A673 (cell line): ENCODE measurements at regions of chr11 and their contacts with region 1.

Region 1: DNA sequence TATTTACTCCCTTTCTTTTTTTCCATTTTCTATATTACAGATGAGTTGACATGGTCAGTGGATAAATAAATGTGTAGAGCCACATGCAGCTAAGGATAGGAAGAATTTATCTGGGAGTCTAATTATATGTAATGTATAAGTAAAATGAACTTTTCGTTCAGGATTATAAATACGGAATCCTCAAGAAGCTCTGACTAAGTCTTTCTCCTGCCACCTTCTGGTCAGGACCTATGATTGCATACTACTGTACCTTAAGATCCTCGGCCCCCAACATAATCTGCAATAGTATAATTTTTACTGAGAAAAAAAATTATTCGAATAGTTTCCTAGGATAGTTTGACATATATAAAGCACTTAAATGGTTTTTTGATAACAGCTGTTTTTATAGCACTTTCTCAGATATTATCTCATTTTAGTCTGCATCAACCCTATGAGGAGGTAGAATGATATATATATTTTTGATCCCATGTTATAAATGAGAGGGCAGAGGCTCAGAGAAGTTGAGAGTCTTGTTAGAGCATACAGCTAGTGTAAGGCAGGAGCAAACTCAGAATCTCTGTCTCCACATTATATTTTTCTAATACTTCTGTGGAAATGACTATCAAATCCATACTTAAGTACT is 36.1 kb downstream of the CCDC90B start:
- DNase-seq: peak; percentile 68
- H3K4me3 ChIP-seq: no peak overlapping the region
- H3K27ac ChIP-seq: no peak overlapping the region
- H3K4me1 ChIP-seq: no peaks in the 10 kb centered on the region
- H3K27me3 ChIP-seq: no peaks in the 10 kb centered on the region
- CTCF ChIP-seq: peak; percentile 81

Region 2: DNA sequence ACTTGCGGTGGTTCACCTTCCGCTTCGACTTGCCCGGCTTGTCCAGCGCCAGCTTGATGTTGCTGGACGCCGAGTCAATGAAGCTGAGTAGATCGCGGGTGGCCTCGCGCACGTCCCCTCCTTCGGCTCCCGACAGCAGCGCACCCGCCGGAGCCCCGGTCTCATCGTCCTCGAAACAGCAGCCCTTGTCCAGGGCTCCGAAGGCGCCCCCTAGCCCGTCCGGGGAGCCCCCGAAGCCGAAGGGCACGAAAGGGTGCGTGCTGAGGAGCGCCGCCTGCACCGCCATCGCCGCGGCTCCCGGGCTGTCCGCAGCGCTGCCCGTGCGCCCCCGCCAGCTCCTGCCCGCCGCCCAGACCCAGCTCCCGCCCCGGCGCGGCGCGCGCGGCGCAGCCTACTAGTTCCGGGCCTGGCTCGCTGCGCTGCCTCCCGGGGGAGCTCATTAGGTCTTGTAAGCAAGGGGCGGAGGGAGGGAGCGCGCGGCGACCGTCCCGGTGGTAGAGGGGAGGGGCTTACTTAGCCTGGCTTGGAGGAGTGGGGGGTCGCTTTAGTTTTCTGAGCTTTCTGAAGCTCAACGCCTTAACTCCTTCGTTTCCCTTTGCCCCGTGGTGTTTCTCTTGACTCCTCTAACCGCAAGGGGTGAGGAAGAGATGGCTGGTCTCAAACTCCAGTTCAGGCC is 516.5 kb before region 1 on chr11 and contains the start of gene FAM181B:
- CTCF ChIA-PET with region 1: no interaction called
- POLR2A ChIA-PET with region 1: no interaction called
- intact Hi-C with region 1: loop called (anchors 10 kb)
- DNase-seq: peak; percentile 82
- H3K4me3 ChIP-seq: peak within 1 kb of the TSS; percentile 53
- H3K27ac ChIP-seq: no peak within 1 kb of the TSS
- H3K4me1 ChIP-seq: peaks cover 5% of the 10 kb centered on the region
- H3K27me3 ChIP-seq: peaks cover 56% of the 10 kb centered on the region
- CTCF ChIP-seq: no peak
- total RNA-seq, gene FAM181B: 0.15 TPM in 1 of 2 replicates, not detected in the other

Region 3: DNA sequence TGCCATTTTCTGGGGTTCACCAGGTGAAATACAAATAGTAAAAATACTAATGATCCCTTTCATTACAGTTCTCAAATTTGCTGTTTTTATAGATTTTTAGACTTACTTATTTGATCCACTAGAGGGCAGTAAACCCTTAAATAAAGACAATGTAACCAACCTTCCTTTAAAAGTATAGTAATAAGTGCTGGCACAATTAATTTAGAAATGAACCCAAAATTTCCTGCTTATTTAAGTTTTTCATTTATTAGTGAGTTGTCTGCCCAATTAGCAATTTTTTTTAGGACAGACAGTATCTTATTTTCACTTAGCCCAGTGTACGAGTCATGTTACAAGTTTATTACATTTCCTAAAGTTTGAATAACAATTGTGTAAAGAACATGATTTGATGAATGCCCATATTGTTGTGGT is 343.8 kb before region 1 on chr11:
- CTCF ChIA-PET with region 1: no interaction called
- POLR2A ChIA-PET with region 1: no interaction called
- intact Hi-C with region 1: loop called (anchors 2 kb)
- DNase-seq: peak; percentile 71
- H3K4me3 ChIP-seq: peak overlapping the region; percentile 6
- H3K27ac ChIP-seq: peak overlapping the region; percentile 3
- H3K4me1 ChIP-seq: peaks cover 26% of the 10 kb centered on the region
- H3K27me3 ChIP-seq: no peaks in the 10 kb centered on the region
- CTCF ChIP-seq: peak; percentile 76

Region 4: DNA sequence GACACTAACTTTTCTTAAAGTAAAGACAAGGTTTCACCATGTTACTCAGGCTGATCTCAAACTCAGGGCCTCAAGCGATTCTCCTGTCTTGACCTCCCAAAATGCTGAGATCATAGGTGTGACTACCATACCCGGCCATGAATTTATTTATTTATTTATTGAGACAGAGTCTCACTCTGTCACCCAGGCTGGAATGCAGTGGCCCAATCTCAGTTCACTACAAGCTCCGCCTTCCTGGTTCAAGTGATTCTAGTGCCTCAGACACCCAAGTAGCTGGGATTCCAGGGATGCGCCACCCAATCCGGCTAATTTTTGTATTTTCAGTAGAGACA is 122.8 kb before region 1 on chr11:
- CTCF ChIA-PET with region 1: no interaction called
- POLR2A ChIA-PET with region 1: no interaction called
- intact Hi-C with region 1: no loop called
- DNase-seq: no peak
- H3K4me3 ChIP-seq: no peak overlapping the region
- H3K27ac ChIP-seq: no peak overlapping the region
- H3K4me1 ChIP-seq: no peaks in the 10 kb centered on the region
- H3K27me3 ChIP-seq: no peaks in the 10 kb centered on the region
- CTCF ChIP-seq: no peak